CD4-positive, alpha-beta memory T cell (primary cell): ENCODE measurements at regions of chr4 and their contacts with region 1.

Region 1: DNA sequence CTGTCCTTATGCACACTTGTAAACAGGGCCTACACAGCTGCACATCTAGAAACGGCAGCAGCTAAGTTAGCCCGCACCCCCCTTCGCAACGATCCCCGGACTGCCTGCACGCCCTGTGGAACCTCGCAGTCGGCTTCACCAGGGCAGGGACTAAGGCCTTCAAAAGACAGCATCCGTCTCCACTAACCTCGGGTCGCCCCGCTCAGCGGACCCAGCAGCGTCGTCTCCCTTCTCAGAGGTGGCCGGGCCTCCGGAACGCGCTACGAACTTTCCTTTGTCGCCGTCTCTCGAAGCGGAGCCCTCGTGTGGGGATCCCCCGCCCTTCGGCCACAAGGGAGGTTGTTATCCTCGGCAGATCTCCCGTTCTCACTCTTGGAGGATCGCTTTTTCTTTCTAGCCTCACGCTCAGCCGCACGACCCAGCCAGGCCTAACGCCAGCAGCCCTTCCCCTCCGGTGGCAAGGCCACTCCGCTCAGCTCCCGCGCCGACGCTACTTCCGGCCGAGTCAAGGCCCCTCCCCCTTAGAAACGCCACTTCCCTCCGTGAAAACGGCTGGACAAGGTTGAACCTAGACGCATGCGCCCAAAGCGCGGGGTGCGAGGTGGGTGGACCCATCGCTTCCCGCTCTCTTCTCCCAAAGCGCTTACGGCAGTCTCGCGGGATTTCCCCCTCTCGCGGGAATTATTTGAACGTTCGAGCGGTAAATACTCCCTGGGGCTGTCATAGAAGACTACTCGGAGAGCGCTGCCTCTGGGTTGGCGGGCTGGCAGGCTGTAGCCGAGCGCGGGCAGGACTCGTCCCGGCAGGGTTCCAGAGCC is at the starts of genes DCAF16 and NCAPG:
- DNase-seq: peak; percentile 98 to 99 (median 99)
- H3K4me3 ChIP-seq: peak within 1 kb of the TSS; percentile 74 to 97
- H3K4me3 Mint-ChIP-seq: peak within 1 kb of the TSS; percentile 96 to 100 (median 98)
- H3K27ac ChIP-seq: peak within 1 kb of the TSS; percentile 97
- H3K27ac Mint-ChIP-seq: peak within 1 kb of the TSS; percentile 97 to 100 (median 99)
- H3K4me1 ChIP-seq: peaks cover 66% of the 10 kb centered on the region
- H3K4me1 Mint-ChIP-seq: peaks cover 45 to 70% (median 56%) of the 10 kb centered on the region in 4 donors
- H3K27me3 ChIP-seq: no peaks in the 10 kb centered on the region
- H3K27me3 Mint-ChIP-seq: no peaks in the 10 kb centered on the region
- total RNA-seq, gene DCAF16: 74.7 to 74.9 TPM
- total RNA-seq, gene NCAPG: 0.20 to 0.83 TPM

Region 2: GRCh38 chr4:17336524-17336961 is 473.9 kb before region 1 on chr4:
- CTCF ChIA-PET with region 1: no interaction called
- POLR2A ChIA-PET with region 1: no interaction called
- intact Hi-C with region 1: loop called (anchors 1 kb)
- DNase-seq: peak; percentile 81 to 94 (median 83)
- H3K4me3 ChIP-seq: no peak overlapping the region
- H3K4me3 Mint-ChIP-seq: peak overlapping the region; percentile 43 to 85 (median 68)
- H3K27ac ChIP-seq: peak overlapping the region; percentile 31
- H3K27ac Mint-ChIP-seq: peak overlapping the region; percentile 90 to 96 (median 93)
- H3K4me1 ChIP-seq: peaks cover 23% of the 10 kb centered on the region
- H3K4me1 Mint-ChIP-seq: peaks cover 15 to 29% (median 22%) of the 10 kb centered on the region in 4 donors
- H3K27me3 ChIP-seq: no peaks in the 10 kb centered on the region
- H3K27me3 Mint-ChIP-seq: peaks cover 0 to 1% of the 10 kb centered on the region in 2 donors

Region 3: GRCh38 chr4:17576932-17577665 is 233.4 kb before region 1 on chr4 and contains the start of gene LAP3:
- CTCF ChIA-PET with region 1: no interaction called
- POLR2A ChIA-PET with region 1: interaction called, 10 read pairs
- intact Hi-C with region 1: loop called (anchors 1 kb)
- DNase-seq: peak; percentile 98 to 99 (median 98)
- H3K4me3 ChIP-seq: peak within 1 kb of the TSS; percentile 79 to 97
- H3K4me3 Mint-ChIP-seq: peak within 1 kb of the TSS; percentile 88 to 94 (median 94)
- H3K27ac ChIP-seq: peak within 1 kb of the TSS; percentile 91
- H3K27ac Mint-ChIP-seq: peak within 1 kb of the TSS; percentile 93 to 99 (median 98)
- H3K4me1 ChIP-seq: peaks cover 23% of the 10 kb centered on the region
- H3K4me1 Mint-ChIP-seq: peaks cover 13 to 31% (median 23%) of the 10 kb centered on the region in 4 donors
- H3K27me3 ChIP-seq: no peaks in the 10 kb centered on the region
- H3K27me3 Mint-ChIP-seq: no peaks in the 10 kb centered on the region
- total RNA-seq, gene LAP3: 25.6 to 27.6 TPM

Region 4: GRCh38 chr4:17636696-17637622 is 173.5 kb before region 1 on chr4:
- CTCF ChIA-PET with region 1: interaction called, 3 read pairs
- POLR2A ChIA-PET with region 1: no interaction called
- intact Hi-C with region 1: loop called (anchors 5 kb)
- DNase-seq: peak; percentile 49 to 64 (median 59)
- H3K4me3 ChIP-seq: no peak overlapping the region
- H3K4me3 Mint-ChIP-seq: no peak overlapping the region
- H3K27ac ChIP-seq: no peak overlapping the region
- H3K27ac Mint-ChIP-seq: peak overlapping the region in 4 of 7 donors; percentile 7 to 56 (median 34)
- H3K4me1 ChIP-seq: no peaks in the 10 kb centered on the region
- H3K4me1 Mint-ChIP-seq: peaks cover 0 to 5% (median under 1%) of the 10 kb centered on the region in 4 donors
- H3K27me3 ChIP-seq: no peaks in the 10 kb centered on the region
- H3K27me3 Mint-ChIP-seq: no peaks in the 10 kb centered on the region

Region 5: DNA sequence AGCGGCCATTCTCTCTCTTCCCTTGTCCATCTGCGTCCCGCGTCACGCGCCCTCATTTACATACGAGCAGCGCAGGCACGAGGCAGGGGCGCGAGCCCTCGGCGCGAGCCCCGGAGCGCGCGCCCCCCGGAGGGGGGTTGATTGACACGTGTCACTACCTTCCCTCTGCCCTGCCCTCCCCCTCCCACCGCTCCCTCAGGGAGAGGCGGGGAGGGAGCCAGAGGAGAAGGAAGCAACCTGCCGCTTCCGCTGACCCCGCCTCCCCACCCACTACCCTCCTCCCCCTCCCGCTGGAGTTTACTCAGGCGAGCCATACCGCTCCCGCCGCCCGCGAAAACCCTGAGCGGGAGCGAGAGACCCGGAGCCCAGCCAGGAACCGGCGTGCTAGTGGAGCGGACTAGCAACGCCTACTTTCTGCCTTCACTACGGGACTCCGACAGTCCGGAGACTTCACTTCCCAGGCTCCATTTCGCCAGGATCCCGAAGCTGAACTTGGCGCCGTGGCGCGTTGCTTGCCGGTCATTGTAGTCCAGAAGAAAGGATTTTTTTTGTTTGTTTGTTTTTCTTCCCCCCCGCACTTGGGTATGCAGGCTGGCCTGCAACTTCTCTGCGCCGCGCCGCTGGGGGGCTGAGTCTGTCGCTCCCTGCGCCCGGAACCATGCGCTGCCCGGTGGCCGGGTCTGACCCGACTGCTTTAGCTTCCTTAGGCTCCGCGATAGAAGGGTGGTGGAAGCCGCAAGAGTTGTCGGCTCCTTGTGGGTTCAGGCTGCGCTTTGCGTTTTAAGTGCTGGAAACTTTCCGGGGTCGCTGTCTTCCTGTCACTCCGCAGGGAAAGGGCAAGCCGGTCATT is 211.5 kb after region 1 on chr4 and contains the start of gene LCORL:
- CTCF ChIA-PET with region 1: interaction called, 3 read pairs
- POLR2A ChIA-PET with region 1: interaction called, 3 read pairs
- intact Hi-C with region 1: loop called (anchors 1 kb)
- DNase-seq: peak; percentile 84 to 91 (median 87)
- H3K4me3 ChIP-seq: peak within 1 kb of the TSS; percentile 68 to 87
- H3K4me3 Mint-ChIP-seq: peak within 1 kb of the TSS; percentile 92 to 98 (median 96)
- H3K27ac ChIP-seq: peak within 1 kb of the TSS; percentile 61
- H3K27ac Mint-ChIP-seq: peak within 1 kb of the TSS; percentile 86 to 97 (median 90)
- H3K4me1 ChIP-seq: peaks cover 24% of the 10 kb centered on the region
- H3K4me1 Mint-ChIP-seq: peaks cover 12 to 33% (median 20%) of the 10 kb centered on the region in 4 donors
- H3K27me3 ChIP-seq: peaks cover 4% of the 10 kb centered on the region
- H3K27me3 Mint-ChIP-seq: peaks cover 6 to 26% of the 10 kb centered on the region in 2 donors
- total RNA-seq, gene LCORL: 11.3 to 14.5 TPM